Endothelial cell of umbilical vein (primary cell): ENCODE measurements at regions of chr11 and their contacts with region 1.

Region 1: GRCh38 chr11:28529540-28530410 is 421.6 kb downstream of the METTL15 start:
- DNase-seq: peak; percentile 65
- H3K4me3 ChIP-seq: no peak overlapping the region
- H3K27ac ChIP-seq: no peak overlapping the region
- H3K4me1 ChIP-seq: no peaks in the 10 kb centered on the region
- H3K27me3 ChIP-seq: no peaks in the 10 kb centered on the region
- CTCF ChIP-seq: peak; percentile 15 to 25
- POLR2A ChIP-seq: no peak

Region 2: GRCh38 chr11:27839226-27839870 is 690.4 kb before region 1 on chr11:
- CTCF ChIA-PET with region 1: interaction called, 32 read pairs
- POLR2A ChIA-PET with region 1: no interaction called
- dilution Hi-C with region 1: no loop called
- intact Hi-C with region 1: loop called (anchors 1 kb)
- DNase-seq: peak; percentile 29
- H3K4me3 ChIP-seq: no peak overlapping the region
- H3K27ac ChIP-seq: no peak overlapping the region
- H3K4me1 ChIP-seq: no peaks in the 10 kb centered on the region
- H3K27me3 ChIP-seq: peaks cover 5 to 16% of the 10 kb centered on the region in 2 experiments
- CTCF ChIP-seq: peak; percentile 13 to 26
- POLR2A ChIP-seq: no peak

Region 3: DNA sequence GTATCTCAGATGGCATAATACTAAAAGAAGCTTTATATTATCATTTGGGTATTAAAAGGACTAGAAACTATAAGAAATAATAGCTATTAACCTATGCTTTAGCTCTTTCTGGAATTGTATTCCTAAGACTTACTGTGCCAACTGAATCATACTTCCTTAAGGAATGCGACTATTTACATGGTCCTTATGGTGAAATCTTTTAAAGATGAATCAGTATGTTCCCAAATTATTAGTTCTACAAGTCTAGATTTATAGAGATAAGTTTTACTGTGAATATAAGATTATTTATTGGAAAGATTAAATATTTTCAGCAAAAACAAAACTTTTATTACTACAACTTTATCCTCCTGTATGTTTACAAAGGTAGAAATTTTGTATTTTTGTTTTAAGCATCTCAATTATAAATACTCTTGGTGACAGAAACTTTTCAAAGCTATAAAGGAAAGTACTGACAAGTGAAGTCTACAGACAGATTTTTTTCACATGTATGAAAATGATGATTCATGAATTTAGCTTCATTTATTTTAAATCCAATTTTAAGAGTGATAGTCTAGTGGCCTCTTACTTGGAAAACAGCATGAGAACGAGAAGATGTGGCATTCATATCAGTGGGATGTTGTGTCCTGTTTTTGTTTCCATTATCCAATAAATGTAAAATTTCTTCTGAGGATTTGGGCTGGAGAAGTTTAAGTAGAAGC is 439.6 kb before region 1 on chr11:
- CTCF ChIA-PET with region 1: interaction called, 13 read pairs
- POLR2A ChIA-PET with region 1: no interaction called
- dilution Hi-C with region 1: no loop called
- intact Hi-C with region 1: no loop called
- DNase-seq: peak; percentile 50
- H3K4me3 ChIP-seq: no peak overlapping the region
- H3K27ac ChIP-seq: peak overlapping the region; percentile 74
- H3K4me1 ChIP-seq: peaks cover 34% of the 10 kb centered on the region
- H3K27me3 ChIP-seq: no peaks in the 10 kb centered on the region
- CTCF ChIP-seq: no peak
- POLR2A ChIP-seq: no peak

Region 4: DNA sequence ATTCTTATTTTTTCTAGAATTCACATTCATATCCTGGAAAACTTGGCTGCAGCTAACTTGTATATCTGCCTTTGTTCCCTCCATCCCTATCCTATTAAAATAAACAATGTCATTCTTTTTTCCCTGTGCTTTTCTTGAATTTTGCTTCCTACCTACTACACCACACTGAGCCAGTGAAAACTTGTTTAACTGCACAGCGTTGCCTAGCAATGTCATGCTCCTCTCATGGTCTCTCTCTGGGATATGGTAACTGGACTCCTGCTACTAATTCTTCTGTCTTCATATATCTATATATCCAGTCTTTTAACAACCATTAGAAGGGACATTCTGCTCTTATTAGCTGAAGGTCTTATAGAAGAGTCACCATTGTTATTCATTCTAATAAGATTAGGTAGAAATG is 12.8 kb after region 1 on chr11:
- CTCF ChIA-PET with region 1: interaction called, 22 read pairs
- POLR2A ChIA-PET with region 1: no interaction called
- dilution Hi-C with region 1: no loop called
- intact Hi-C with region 1: no loop called
- DNase-seq: no peak
- H3K4me3 ChIP-seq: no peak overlapping the region
- H3K27ac ChIP-seq: no peak overlapping the region
- H3K4me1 ChIP-seq: no peaks in the 10 kb centered on the region
- H3K27me3 ChIP-seq: no peaks in the 10 kb centered on the region
- CTCF ChIP-seq: no peak
- POLR2A ChIP-seq: no peak

Region 5: DNA sequence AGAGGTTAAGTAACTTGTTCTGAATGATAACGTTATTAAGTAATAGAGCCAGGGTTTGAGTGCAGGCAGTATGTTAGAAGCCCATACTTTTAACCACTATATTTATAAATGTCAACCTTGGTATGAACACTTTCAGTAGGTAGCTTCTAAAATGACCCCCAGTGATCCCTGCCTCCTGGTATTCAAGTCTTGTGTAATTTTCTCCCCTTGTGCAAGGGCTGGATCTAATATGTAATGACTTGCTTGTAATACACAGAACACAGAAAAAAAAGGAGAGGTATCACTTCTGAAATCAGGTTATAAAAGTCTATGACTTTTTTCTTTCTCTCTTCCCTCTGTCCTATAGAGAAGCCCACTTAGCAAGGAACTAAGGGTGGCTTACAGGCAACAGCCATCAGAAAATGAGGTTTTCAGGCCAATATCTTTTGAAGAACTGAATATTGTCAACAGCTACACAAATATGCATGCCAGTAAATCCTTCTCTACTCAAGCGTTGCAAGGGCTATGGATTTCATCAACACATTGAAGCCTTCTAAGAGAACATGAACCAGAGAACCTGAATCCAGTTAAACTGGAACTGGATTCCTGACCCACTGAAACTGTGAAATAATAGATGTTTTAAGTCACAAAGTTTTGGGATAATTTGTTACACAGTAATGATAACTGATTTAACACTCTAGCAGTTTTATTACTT is 290.7 kb after region 1 on chr11:
- CTCF ChIA-PET with region 1: no interaction called
- POLR2A ChIA-PET with region 1: no interaction called
- dilution Hi-C with region 1: no loop called
- intact Hi-C with region 1: no loop called
- DNase-seq: no peak
- H3K4me3 ChIP-seq: no peak overlapping the region
- H3K27ac ChIP-seq: no peak overlapping the region
- H3K4me1 ChIP-seq: peaks cover 7% of the 10 kb centered on the region
- H3K27me3 ChIP-seq: no peaks in the 10 kb centered on the region
- CTCF ChIP-seq: no peak
- POLR2A ChIP-seq: no peak

Region 6: GRCh38 chr11:29328961-29329441 is 799.2 kb after region 1 on chr11:
- CTCF ChIA-PET with region 1: interaction called, 21 read pairs
- POLR2A ChIA-PET with region 1: no interaction called
- dilution Hi-C with region 1: no loop called
- intact Hi-C with region 1: loop called (anchors 1 kb)
- DNase-seq: peak; percentile 75
- H3K4me3 ChIP-seq: no peak overlapping the region
- H3K27ac ChIP-seq: no peak overlapping the region
- H3K4me1 ChIP-seq: peaks cover 7% of the 10 kb centered on the region
- H3K27me3 ChIP-seq: no peaks in the 10 kb centered on the region
- CTCF ChIP-seq: peak; percentile 63 to 66
- POLR2A ChIP-seq: no peak